Naive thymus-derived CD8-positive, alpha-beta T cell (primary cell): ENCODE measurements at regions of chr19 and their contacts with region 1.

Region 1: GRCh38 chr19:15379083-15379995 is at the start of gene AKAP8:
- DNase-seq: peak; percentile 96 to 99 (median 98)
- ATAC-seq: peak; percentile 86 to 92
- H3K4me3 Mint-ChIP-seq: peak within 1 kb of the TSS; percentile 92 to 100 (median 98)
- H3K27ac Mint-ChIP-seq: peak within 1 kb of the TSS; percentile 96 to 100 (median 100)
- H3K4me1 Mint-ChIP-seq: peaks cover 18 to 43% (median 36%) of the 10 kb centered on the region in 4 donors
- H3K27me3 Mint-ChIP-seq: no peaks in the 10 kb centered on the region
- polyA plus RNA-seq, gene AKAP8: 12.8 to 16.7 (median 14.2) TPM

Region 2: GRCh38 chr19:15125232-15126067 is 253.9 kb before region 1 on chr19:
- POLR2A ChIA-PET with region 1: interaction called, 12 read pairs
- DNase-seq: peak; percentile 95 to 99 (median 97)
- ATAC-seq: peak; percentile 88
- H3K4me3 Mint-ChIP-seq: peak overlapping the region; percentile 92 to 99 (median 96)
- H3K27ac Mint-ChIP-seq: peak overlapping the region; percentile 92 to 99 (median 98)
- H3K4me1 Mint-ChIP-seq: peaks cover 31 to 57% (median 50%) of the 10 kb centered on the region in 4 donors
- H3K27me3 Mint-ChIP-seq: peaks cover 0 to 4% (median 0%) of the 10 kb centered on the region in 5 donors

Region 3: DNA sequence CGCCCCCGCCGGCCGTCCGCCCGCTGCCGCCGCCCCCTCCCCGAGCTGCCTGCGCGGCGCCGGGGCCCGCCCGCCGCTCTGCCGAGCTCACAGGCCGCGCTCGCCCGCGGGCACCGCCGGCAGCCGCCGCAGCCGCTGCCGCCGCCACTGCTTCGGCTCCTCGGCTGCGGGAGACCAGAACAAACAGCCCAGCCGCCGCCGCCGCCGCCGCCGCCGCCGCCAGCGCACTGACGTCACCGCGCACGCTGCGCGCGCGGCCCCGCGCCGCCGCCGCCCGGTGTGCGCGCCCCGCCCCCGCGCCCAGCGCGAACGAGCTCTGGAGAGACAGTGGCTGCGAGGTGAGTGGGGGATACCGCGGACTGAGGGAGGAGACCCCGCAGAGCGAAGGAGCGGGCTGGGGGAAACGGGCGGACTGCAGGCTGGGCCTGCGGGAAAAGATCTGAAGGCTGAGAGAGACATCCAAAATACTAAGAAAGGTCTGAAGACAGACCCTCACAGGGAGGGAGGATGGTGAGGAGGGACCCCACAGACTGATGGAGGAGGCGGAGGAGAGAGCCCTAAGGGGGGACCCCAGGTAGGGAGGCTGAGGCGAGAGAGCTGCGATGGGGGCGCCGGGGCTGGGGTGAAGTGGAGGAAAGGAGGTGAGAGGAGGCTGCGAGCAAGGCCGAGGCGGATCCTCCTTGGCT is 46.9 kb before region 1 on chr19 and contains the start of gene BRD4:
- POLR2A ChIA-PET with region 1: interaction called, 36 read pairs
- DNase-seq: peak; percentile 61 to 84 (median 80)
- ATAC-seq: peak; percentile 60 to 65
- H3K4me3 Mint-ChIP-seq: peak within 1 kb of the TSS; percentile 91 to 98 (median 94)
- H3K27ac Mint-ChIP-seq: peak within 1 kb of the TSS; percentile 93 to 97 (median 94)
- H3K4me1 Mint-ChIP-seq: peaks cover 24 to 57% (median 49%) of the 10 kb centered on the region in 4 donors
- H3K27me3 Mint-ChIP-seq: no peaks in the 10 kb centered on the region
- polyA plus RNA-seq, gene BRD4: 10.6 to 37.2 (median 11.5) TPM

Region 4: GRCh38 chr19:15432629-15433518 is 53.5 kb after region 1 on chr19:
- POLR2A ChIA-PET with region 1: interaction called, 19 read pairs
- DNase-seq: peak; percentile 83 to 94 (median 90)
- ATAC-seq: peak; percentile 89 to 94
- H3K4me3 Mint-ChIP-seq: peak overlapping the region; percentile 88 to 99 (median 94)
- H3K27ac Mint-ChIP-seq: peak overlapping the region; percentile 84 to 99 (median 95)
- H3K4me1 Mint-ChIP-seq: peaks cover 19 to 34% (median 29%) of the 10 kb centered on the region in 4 donors
- H3K27me3 Mint-ChIP-seq: no peaks in the 10 kb centered on the region

Region 5: GRCh38 chr19:15555759-15556633 is 176.7 kb after region 1 on chr19:
- POLR2A ChIA-PET with region 1: interaction called, 14 read pairs
- DNase-seq: peak; percentile 92 to 98 (median 96)
- ATAC-seq: peak; percentile 86
- H3K4me3 Mint-ChIP-seq: peak overlapping the region; percentile 77 to 92 (median 86)
- H3K27ac Mint-ChIP-seq: peak overlapping the region; percentile 80 to 98 (median 91)
- H3K4me1 Mint-ChIP-seq: peaks cover 13 to 29% (median 17%) of the 10 kb centered on the region in 4 donors
- H3K27me3 Mint-ChIP-seq: peaks cover 0 to 2% (median 0%) of the 10 kb centered on the region in 5 donors